Ascending aorta (tissue), 2 donors: ENCODE measurements at regions of chr1 and their contacts with region 1.

Region 1: GRCh38 chr1:205255941-205256780 is 28.4 kb downstream of the TMCC2 start:
- DNase-seq: peak; percentile 66 to 94
- H3K4me3 ChIP-seq: no peak overlapping the region
- H3K27ac ChIP-seq: no peak overlapping the region
- H3K4me1 ChIP-seq: peaks cover 6 to 10% of the 10 kb centered on the region in 2 donors
- H3K27me3 ChIP-seq: no peaks in the 10 kb centered on the region
- CTCF ChIP-seq: peak; percentile 95 to 98 (median 98)

Region 2: DNA sequence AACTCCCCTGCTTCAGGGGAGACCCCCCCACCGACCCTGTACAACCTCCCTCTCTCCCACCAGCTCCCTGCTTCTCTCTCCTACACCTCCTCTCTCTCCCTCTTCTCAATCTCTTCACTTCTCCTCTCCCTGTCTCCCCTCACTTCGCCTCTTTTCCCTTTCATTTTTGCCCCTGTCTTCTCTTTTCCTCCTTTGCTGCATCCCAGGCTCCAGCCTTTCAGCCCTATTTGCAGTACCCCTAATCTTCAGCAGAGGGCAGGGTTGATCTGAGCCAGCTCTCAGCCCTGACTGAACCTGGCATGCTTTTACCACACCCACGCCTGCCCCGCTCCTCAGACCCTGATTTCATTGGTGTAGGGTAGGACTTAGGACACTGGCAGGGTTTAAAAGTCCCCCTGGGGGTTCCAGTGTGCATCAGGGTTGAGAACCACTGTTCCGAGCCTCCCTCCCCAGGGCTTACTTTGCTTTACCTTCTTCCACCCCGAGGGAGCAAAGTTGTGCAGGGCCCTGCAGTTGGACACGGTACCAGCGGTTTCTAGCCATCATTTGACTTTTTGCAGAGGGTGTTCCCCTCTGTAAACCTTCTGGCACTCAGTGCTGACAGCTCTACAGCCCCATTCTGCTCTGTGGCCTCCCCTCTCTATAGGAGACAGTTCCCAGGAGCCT is 280.5 kb before region 1 on chr1:
- intact Hi-C with region 1: loop called (anchors 5 kb)
- DNase-seq: no peak
- H3K4me3 ChIP-seq: no peak overlapping the region
- H3K27ac ChIP-seq: no peak overlapping the region
- H3K4me1 ChIP-seq: no peaks in the 10 kb centered on the region
- H3K27me3 ChIP-seq: no peaks in the 10 kb centered on the region
- CTCF ChIP-seq: peak; percentile 44 to 74 (median 63)

Region 3: GRCh38 chr1:205121660-205122488 is 134.3 kb before region 1 on chr1 and contains the start of gene RBBP5:
- intact Hi-C with region 1: loop called (anchors 1 kb)
- DNase-seq: peak; percentile 84 to 97
- H3K4me3 ChIP-seq: peak within 1 kb of the TSS; percentile 73 to 90
- H3K27ac ChIP-seq: peak within 1 kb of the TSS; percentile 87 to 92
- H3K4me1 ChIP-seq: peaks cover 18% of the 10 kb centered on the region in 2 donors
- H3K27me3 ChIP-seq: no peaks in the 10 kb centered on the region
- CTCF ChIP-seq: peak; percentile 58 to 74 (median 64)
- total RNA-seq, gene RBBP5: 7.2 TPM

Region 4: GRCh38 chr1:205141236-205142101 is 114.7 kb before region 1 on chr1:
- intact Hi-C with region 1: loop called (anchors 5 kb)
- DNase-seq: peak in 1 of 2 donors; percentile 88
- H3K4me3 ChIP-seq: peak overlapping the region in 1 of 2 donors; percentile 43
- H3K27ac ChIP-seq: no peak overlapping the region
- H3K4me1 ChIP-seq: peaks cover 4 to 7% of the 10 kb centered on the region in 2 donors
- H3K27me3 ChIP-seq: no peaks in the 10 kb centered on the region
- CTCF ChIP-seq: peak; percentile 62 to 75 (median 68)

Region 5: DNA sequence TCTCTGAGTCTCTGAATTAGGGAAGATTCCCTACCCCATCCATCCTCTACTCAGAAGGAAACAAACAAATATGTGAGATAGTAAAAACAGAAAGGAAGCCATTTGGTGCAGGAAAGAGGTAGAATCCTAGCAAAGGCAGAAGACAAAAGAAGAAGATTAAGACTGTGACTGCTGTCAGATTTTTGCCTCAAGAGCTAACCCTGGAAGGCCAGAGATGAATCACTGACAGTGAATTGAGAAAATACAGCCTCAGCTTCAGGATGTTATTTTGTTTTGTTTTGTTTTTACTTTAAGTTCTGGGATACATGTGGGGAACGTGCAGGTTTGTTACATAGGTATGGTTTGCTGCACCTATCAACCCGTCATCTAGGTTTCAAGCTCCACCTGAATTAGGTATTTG is 76.3 kb before region 1 on chr1:
- intact Hi-C with region 1: loop called (anchors 5 kb)
- DNase-seq: no peak
- H3K4me3 ChIP-seq: no peak overlapping the region
- H3K27ac ChIP-seq: no peak overlapping the region
- H3K4me1 ChIP-seq: peaks cover 0 to 9% of the 10 kb centered on the region in 2 donors
- H3K27me3 ChIP-seq: no peaks in the 10 kb centered on the region
- CTCF ChIP-seq: no peak

Region 6: GRCh38 chr1:205211169-205211838 is 44.9 kb before region 1 on chr1 and contains the start of gene DSTYK:
- intact Hi-C with region 1: loop called (anchors 5 kb)
- DNase-seq: peak; percentile 79 to 97
- H3K4me3 ChIP-seq: peak within 1 kb of the TSS; percentile 94 to 98
- H3K27ac ChIP-seq: peak within 1 kb of the TSS; percentile 92
- H3K4me1 ChIP-seq: peaks cover 6 to 8% of the 10 kb centered on the region in 2 donors
- H3K27me3 ChIP-seq: no peaks in the 10 kb centered on the region
- CTCF ChIP-seq: no peak
- total RNA-seq, gene DSTYK: 8.1 TPM

Region 7: GRCh38 chr1:205227584-205228006 is 28.6 kb before region 1 on chr1 and contains the start of gene TMCC2:
- intact Hi-C with region 1: loop called (anchors 1 kb)
- DNase-seq: peak; percentile 39 to 92
- H3K4me3 ChIP-seq: peak within 1 kb of the TSS; percentile 40 to 86
- H3K27ac ChIP-seq: peak within 1 kb of the TSS in 1 of 2 donors; percentile 65
- H3K4me1 ChIP-seq: peaks cover 0 to 20% of the 10 kb centered on the region in 2 donors
- H3K27me3 ChIP-seq: no peaks in the 10 kb centered on the region
- CTCF ChIP-seq: no peak
- total RNA-seq, gene TMCC2: 5.2 TPM